Activated CD8-positive, alpha-beta memory T cell treated with anti-CD3 and anti-CD28 coated beads, Interleukin-2, amount 10 ng/mL, durations not matched to agents 7 days and 5 days (primary cell): ENCODE measurements at regions of chr11 and their contacts with region 1.

Region 1: DNA sequence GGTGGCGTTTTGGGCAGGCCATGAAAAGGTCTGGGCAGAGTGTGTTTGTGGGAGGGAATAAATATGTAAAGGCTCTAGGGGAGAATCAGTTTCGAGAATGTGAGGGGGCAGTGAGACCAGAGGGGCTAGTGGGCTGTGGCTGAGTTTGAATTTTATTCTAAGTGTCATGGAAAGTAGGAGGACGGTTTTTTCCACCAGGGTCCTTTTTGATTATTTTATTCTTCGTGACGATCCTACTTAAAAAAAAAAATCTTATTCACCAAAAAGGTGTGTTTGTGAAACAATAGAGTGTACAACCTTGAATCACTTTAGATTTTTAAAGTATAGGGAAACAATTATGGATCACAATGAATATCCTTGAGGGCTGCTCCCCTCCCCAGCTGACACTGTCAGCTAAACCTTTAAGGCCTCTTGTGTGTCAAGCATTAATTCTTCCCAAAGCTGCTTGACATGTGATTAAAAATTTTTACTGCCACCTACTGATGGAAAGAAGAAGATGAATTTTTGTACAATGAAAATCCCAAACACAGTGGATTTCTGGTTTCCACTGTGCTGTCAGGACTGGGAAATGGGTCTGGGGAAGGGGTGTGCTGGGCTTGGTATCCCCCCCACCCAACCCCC is 107.5 kb upstream of the OR4B1 start:
- DNase-seq: no peak
- ATAC-seq: peak; percentile 22
- H3K4me3 Mint-ChIP-seq: peak overlapping the region; percentile 69
- H3K27ac Mint-ChIP-seq: peak overlapping the region; percentile 92
- H3K4me1 Mint-ChIP-seq: peaks cover 47% of the 10 kb centered on the region
- H3K27me3 Mint-ChIP-seq: no peaks in the 10 kb centered on the region

Region 2: GRCh38 chr11:47524291-47524874 is 584.8 kb before region 1 on chr11:
- CTCF ChIA-PET with region 1: no interaction called
- DNase-seq: no peak
- ATAC-seq: peak; percentile 51
- H3K4me3 Mint-ChIP-seq: no peak overlapping the region
- H3K27ac Mint-ChIP-seq: peak overlapping the region; percentile 69
- H3K4me1 Mint-ChIP-seq: peaks cover 44% of the 10 kb centered on the region
- H3K27me3 Mint-ChIP-seq: no peaks in the 10 kb centered on the region

Region 3: GRCh38 chr11:47917643-47918369 is 191.3 kb before region 1 on chr11:
- CTCF ChIA-PET with region 1: interaction called, 18 read pairs
- DNase-seq: no peak
- ATAC-seq: no peak
- H3K4me3 Mint-ChIP-seq: no peak overlapping the region
- H3K27ac Mint-ChIP-seq: no peak overlapping the region
- H3K4me1 Mint-ChIP-seq: peaks cover 42% of the 10 kb centered on the region
- H3K27me3 Mint-ChIP-seq: no peaks in the 10 kb centered on the region

Region 4: DNA sequence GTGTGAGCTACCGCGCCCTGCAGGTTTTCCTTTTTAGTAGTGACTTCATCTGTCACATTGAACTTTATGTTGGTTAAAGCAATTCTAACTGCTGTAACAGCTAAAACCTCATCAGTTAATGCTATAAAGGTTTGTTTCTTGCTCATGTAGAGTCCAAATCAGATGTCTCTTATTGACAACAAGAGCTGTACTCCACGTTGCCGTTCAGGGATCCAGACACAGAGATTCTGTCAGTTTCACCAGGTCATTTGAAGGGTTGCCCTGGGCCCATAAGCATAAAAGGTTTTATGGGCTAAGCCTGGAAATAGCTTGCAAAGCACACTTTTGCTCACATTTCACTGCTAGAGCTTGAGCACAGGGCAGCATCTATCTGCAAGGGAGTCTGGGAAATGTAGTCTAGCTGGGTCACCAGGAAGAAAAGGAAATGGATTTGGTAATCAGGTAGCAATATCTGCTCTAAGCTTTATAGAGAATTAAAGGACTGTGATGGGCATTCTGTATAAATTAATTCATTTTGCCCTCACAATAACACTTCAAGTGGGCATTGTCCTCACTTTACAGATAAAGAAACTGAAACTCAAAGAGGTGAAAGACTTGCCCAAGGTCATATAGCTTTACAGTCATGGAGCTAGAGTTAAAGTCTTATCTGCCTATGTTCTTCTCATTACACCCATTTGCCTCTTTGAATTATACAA is 153.9 kb before region 1 on chr11:
- CTCF ChIA-PET with region 1: interaction called, 15 read pairs
- DNase-seq: no peak
- ATAC-seq: no peak
- H3K4me3 Mint-ChIP-seq: no peak overlapping the region
- H3K27ac Mint-ChIP-seq: peak overlapping the region; percentile 62
- H3K4me1 Mint-ChIP-seq: peaks cover 24% of the 10 kb centered on the region
- H3K27me3 Mint-ChIP-seq: no peaks in the 10 kb centered on the region

Region 5: GRCh38 chr11:47964546-47964945 is 144.6 kb before region 1 on chr11:
- CTCF ChIA-PET with region 1: interaction called, 10 read pairs
- DNase-seq: no peak
- ATAC-seq: no peak
- H3K4me3 Mint-ChIP-seq: no peak overlapping the region
- H3K27ac Mint-ChIP-seq: no peak overlapping the region
- H3K4me1 Mint-ChIP-seq: peaks cover 2% of the 10 kb centered on the region
- H3K27me3 Mint-ChIP-seq: no peaks in the 10 kb centered on the region

Region 6: GRCh38 chr11:47981050-47981621 is 128.0 kb before region 1 on chr11:
- CTCF ChIA-PET with region 1: interaction called, 16 read pairs
- DNase-seq: peak; percentile 55
- ATAC-seq: peak; percentile 57
- H3K4me3 Mint-ChIP-seq: peak overlapping the region; percentile 97
- H3K27ac Mint-ChIP-seq: peak overlapping the region; percentile 92
- H3K4me1 Mint-ChIP-seq: peaks cover 34% of the 10 kb centered on the region
- H3K27me3 Mint-ChIP-seq: peaks cover 8% of the 10 kb centered on the region

Region 7: GRCh38 chr11:48055292-48056132 is 53.6 kb before region 1 on chr11:
- CTCF ChIA-PET with region 1: interaction called, 65 read pairs
- DNase-seq: peak; percentile 93
- ATAC-seq: peak; percentile 92
- H3K4me3 Mint-ChIP-seq: peak overlapping the region; percentile 65
- H3K27ac Mint-ChIP-seq: peak overlapping the region; percentile 94
- H3K4me1 Mint-ChIP-seq: peaks cover 83% of the 10 kb centered on the region
- H3K27me3 Mint-ChIP-seq: no peaks in the 10 kb centered on the region